ENCODE measurements at regions of chr19 and their contacts with region 1.

Region 1: GRCh38 chr19:4400135-4400936 is at the start of gene SH3GL1:
- DNase-seq: peak; percentile 89 to 95 (median 92)
- H3K4me3 ChIP-seq: peak within 1 kb of the TSS; percentile 53 to 59
- H3K4me3 Mint-ChIP-seq: peak within 1 kb of the TSS; percentile 82 to 94 (median 92)
- H3K27ac ChIP-seq: peak within 1 kb of the TSS; percentile 89
- H3K27ac Mint-ChIP-seq: peak within 1 kb of the TSS; percentile 96 to 100 (median 99)
- H3K4me1 ChIP-seq: peaks cover 54% of the 10 kb centered on the region
- H3K4me1 Mint-ChIP-seq: peaks cover 30 to 75% (median 56%) of the 10 kb centered on the region in 4 donors
- H3K27me3 ChIP-seq: no peaks in the 10 kb centered on the region
- H3K27me3 Mint-ChIP-seq: no peaks in the 10 kb centered on the region
- total RNA-seq, gene SH3GL1: 40.1 to 45.6 TPM

Region 2: GRCh38 chr19:4267101-4267900 is 133.0 kb before region 1 on chr19:
- CTCF ChIA-PET with region 1: interaction called, 4 read pairs
- POLR2A ChIA-PET with region 1: interaction called, 4 read pairs
- intact Hi-C with region 1: loop called (anchors 1 kb)
- DNase-seq: peak; percentile 41 to 57 (median 46)
- H3K4me3 ChIP-seq: no peak overlapping the region
- H3K4me3 Mint-ChIP-seq: no peak overlapping the region
- H3K27ac ChIP-seq: no peak overlapping the region
- H3K27ac Mint-ChIP-seq: peak overlapping the region in 6 of 7 donors; percentile 22 to 93 (median 76)
- H3K4me1 ChIP-seq: peaks cover 7% of the 10 kb centered on the region
- H3K4me1 Mint-ChIP-seq: peaks cover 12 to 19% (median 15%) of the 10 kb centered on the region in 4 donors
- H3K27me3 ChIP-seq: no peaks in the 10 kb centered on the region
- H3K27me3 Mint-ChIP-seq: no peaks in the 10 kb centered on the region

Region 3: DNA sequence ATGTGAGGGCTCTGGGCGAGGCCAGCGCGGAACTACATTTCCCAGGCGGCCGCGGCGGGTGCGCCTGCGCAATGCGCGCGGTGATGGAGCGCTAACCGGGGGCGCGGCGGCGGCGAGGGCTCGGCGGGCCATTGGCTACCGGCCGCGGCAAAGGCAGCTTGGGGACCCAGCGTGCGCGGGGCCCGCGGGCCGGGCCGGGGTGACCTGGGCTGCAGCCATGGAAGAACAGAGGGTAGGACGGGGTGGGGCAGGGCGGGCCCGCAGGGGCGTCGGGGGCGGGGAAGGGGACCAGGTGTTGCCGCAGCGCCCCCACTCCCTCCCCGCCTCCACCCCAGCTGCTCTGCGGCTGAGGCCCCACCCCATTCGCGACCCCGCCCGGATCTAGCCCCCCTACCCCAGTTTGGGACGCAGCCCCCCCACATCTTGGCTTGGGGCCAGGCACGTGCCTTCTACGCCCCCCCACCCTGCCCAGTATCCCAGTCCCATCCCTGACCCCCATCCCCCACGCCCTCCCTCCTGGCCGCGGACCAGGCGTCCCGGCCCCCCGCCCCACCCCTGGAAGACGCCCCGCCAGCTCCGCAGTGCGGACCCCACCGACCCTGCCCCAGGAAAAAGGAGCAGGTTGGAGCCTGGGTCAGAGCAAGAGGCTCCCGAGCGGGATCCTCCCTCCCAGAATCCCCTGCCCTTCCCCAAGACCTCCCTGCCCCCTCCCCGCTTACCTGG is 95.6 kb before region 1 on chr19 and contains the start of gene FSD1:
- CTCF ChIA-PET with region 1: no interaction called
- POLR2A ChIA-PET with region 1: no interaction called
- intact Hi-C with region 1: no loop called
- DNase-seq: peak in 4 of 5 donors; percentile 38 to 51 (median 46)
- H3K4me3 ChIP-seq: no peak within 1 kb of the TSS
- H3K4me3 Mint-ChIP-seq: peak within 1 kb of the TSS; percentile 28 to 80 (median 67)
- H3K27ac ChIP-seq: no peak within 1 kb of the TSS
- H3K27ac Mint-ChIP-seq: peak within 1 kb of the TSS in 5 of 7 donors; percentile 42 to 87 (median 74)
- H3K4me1 ChIP-seq: peaks cover 18% of the 10 kb centered on the region
- H3K4me1 Mint-ChIP-seq: peaks cover 13 to 31% (median 22%) of the 10 kb centered on the region in 4 donors
- H3K27me3 ChIP-seq: no peaks in the 10 kb centered on the region
- H3K27me3 Mint-ChIP-seq: peaks cover 0 to 6% of the 10 kb centered on the region in 2 donors
- total RNA-seq, gene FSD1: 0.73 to 1.4 TPM

Region 4: DNA sequence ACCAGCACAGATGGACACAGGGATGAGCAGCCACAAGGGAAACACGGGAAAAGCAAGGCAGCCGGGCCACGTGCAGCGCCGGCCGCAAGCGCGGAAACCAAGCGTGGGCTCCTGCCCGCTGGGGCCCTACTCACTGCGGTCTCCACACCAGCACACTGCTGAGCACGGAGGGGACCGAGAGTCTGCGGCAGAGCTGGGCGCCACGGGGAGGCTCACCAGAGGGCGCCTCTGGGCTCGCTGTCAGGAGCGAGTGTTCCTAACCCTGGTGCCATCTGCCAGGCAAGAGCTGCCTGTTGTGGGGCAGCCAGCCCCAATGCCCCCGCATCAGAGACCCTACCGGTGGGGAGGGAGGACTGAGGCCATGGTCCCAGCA is 30.5 kb before region 1 on chr19:
- CTCF ChIA-PET with region 1: interaction called, 25 read pairs
- POLR2A ChIA-PET with region 1: interaction called, 85 read pairs
- intact Hi-C with region 1: loop called (anchors 1 kb)
- DNase-seq: peak; percentile 69 to 78 (median 71)
- H3K4me3 ChIP-seq: peak overlapping the region; percentile 51 to 69
- H3K4me3 Mint-ChIP-seq: peak overlapping the region; percentile 79 to 97 (median 92)
- H3K27ac ChIP-seq: peak overlapping the region; percentile 87
- H3K27ac Mint-ChIP-seq: peak overlapping the region; percentile 92 to 97 (median 95)
- H3K4me1 ChIP-seq: peaks cover 67% of the 10 kb centered on the region
- H3K4me1 Mint-ChIP-seq: peaks cover 14 to 54% (median 30%) of the 10 kb centered on the region in 4 donors
- H3K27me3 ChIP-seq: no peaks in the 10 kb centered on the region
- H3K27me3 Mint-ChIP-seq: no peaks in the 10 kb centered on the region

Region 5: GRCh38 chr19:4457654-4458395 is 57.5 kb after region 1 on chr19 and contains the start of gene UBXN6:
- CTCF ChIA-PET with region 1: interaction called, 4 read pairs
- POLR2A ChIA-PET with region 1: no interaction called
- intact Hi-C with region 1: loop called (anchors 1 kb)
- DNase-seq: peak; percentile 97 to 99 (median 98)
- H3K4me3 ChIP-seq: peak within 1 kb of the TSS; percentile 42 to 52
- H3K4me3 Mint-ChIP-seq: peak within 1 kb of the TSS; percentile 89 to 94 (median 91)
- H3K27ac ChIP-seq: peak within 1 kb of the TSS; percentile 62
- H3K27ac Mint-ChIP-seq: peak within 1 kb of the TSS; percentile 90 to 97 (median 96)
- H3K4me1 ChIP-seq: peaks cover 16% of the 10 kb centered on the region
- H3K4me1 Mint-ChIP-seq: peaks cover 11 to 26% (median 17%) of the 10 kb centered on the region in 4 donors
- H3K27me3 ChIP-seq: no peaks in the 10 kb centered on the region
- H3K27me3 Mint-ChIP-seq: peaks cover 0 to 2% of the 10 kb centered on the region in 2 donors
- total RNA-seq, gene UBXN6: 61.3 to 63.5 TPM

Region 6: DNA sequence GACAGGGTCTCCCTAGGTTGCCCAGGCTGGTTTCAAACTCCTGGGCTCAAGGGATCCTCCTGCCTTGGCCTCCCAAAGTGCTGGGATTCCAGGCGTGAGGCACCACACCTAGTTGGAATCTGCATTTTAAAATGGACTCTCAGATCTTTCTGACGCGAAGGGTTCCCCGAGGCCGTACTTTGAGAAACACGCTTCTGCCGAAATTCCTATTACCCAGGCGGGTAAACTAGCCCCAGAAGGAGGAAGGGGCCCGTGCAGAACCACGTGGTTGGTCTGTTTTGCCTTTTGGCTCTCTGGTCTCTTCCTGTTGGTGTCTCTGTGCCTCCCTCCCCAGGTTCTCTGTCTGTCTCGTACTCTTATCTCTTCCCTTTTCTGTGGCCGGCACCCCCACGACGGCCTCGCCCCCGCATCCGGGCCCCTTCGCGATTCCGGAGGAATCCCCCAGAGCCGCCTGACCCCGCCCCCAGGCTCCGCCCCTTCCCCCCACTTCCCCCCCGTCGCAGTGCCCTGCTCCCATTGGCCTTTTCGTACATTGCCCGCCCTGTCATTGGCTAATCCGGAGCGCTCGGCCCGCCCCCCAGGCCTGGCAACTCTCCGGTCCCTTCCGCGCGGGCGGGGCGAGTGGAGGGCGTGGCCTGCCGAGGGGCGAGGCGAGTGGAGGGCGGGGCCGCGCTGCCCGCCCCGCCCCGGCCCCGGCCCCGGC is 238.6 kb after region 1 on chr19 and contains the start of gene TNFAIP8L1:
- CTCF ChIA-PET with region 1: no interaction called
- POLR2A ChIA-PET with region 1: no interaction called
- intact Hi-C with region 1: loop called (anchors 5 kb)
- DNase-seq: peak; percentile 98 to 100 (median 99)
- H3K4me3 ChIP-seq: peak within 1 kb of the TSS; percentile 90 to 94
- H3K4me3 Mint-ChIP-seq: peak within 1 kb of the TSS; percentile 95 to 98 (median 97)
- H3K27ac ChIP-seq: peak within 1 kb of the TSS; percentile 83
- H3K27ac Mint-ChIP-seq: peak within 1 kb of the TSS; percentile 94 to 99 (median 99)
- H3K4me1 ChIP-seq: peaks cover 40% of the 10 kb centered on the region
- H3K4me1 Mint-ChIP-seq: peaks cover 8 to 41% (median 27%) of the 10 kb centered on the region in 4 donors
- H3K27me3 ChIP-seq: no peaks in the 10 kb centered on the region
- H3K27me3 Mint-ChIP-seq: no peaks in the 10 kb centered on the region
- total RNA-seq, gene TNFAIP8L1: 16.2 to 17.2 TPM

Measured in CD4-positive, alpha-beta memory T cell (primary cell).